ENCODE measurements at regions of chr20 and their contacts with region 1.

Region 1: GRCh38 chr20:2349818-2350508 is 30.7 kb upstream of the TGM6 start:
- DNase-seq: no peak
- H3K4me3 ChIP-seq: no peak overlapping the region
- H3K27ac ChIP-seq: no peak overlapping the region
- H3K4me1 ChIP-seq: peaks cover 4% of the 10 kb centered on the region
- CTCF ChIP-seq: no peak

Region 2: DNA sequence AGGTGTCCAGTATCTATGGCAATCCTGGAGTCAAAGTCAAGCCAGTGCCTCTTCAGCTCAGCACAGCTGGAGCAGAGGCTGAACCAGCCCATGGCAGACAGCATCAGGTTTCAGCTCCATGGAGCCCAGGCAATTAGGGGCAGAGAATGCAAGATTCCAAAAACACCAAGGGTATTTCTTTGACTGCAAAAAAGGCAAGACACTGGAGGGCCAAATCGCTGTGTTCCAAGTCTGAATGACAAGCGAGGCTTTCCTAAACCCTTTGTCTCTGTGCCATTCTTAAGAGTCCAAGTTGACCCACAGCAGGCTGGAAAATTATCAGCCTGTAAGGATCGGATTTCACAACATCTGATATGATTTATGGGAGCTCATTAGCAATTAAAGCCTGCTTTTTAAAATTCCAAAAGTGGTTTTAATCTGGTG is 103.9 kb before region 1 on chr20:
- CTCF ChIA-PET with region 1: no interaction called
- POLR2A ChIA-PET with region 1: no interaction called
- intact Hi-C with region 1: loop called (anchors 10 kb)
- DNase-seq: no peak
- H3K4me3 ChIP-seq: no peak overlapping the region
- H3K27ac ChIP-seq: no peak overlapping the region
- H3K4me1 ChIP-seq: no peaks in the 10 kb centered on the region
- CTCF ChIP-seq: no peak

Region 3: GRCh38 chr20:2752567-2753460 is 402.9 kb after region 1 on chr20:
- CTCF ChIA-PET with region 1: no interaction called
- POLR2A ChIA-PET with region 1: no interaction called
- intact Hi-C with region 1: no loop called
- DNase-seq: no peak
- H3K4me3 ChIP-seq: no peak overlapping the region
- H3K27ac ChIP-seq: no peak overlapping the region
- H3K4me1 ChIP-seq: no peaks in the 10 kb centered on the region
- CTCF ChIP-seq: peak; percentile 68

Region 4: GRCh38 chr20:2919518-2920245 is 569.7 kb after region 1 on chr20:
- CTCF ChIA-PET with region 1: no interaction called
- POLR2A ChIA-PET with region 1: interaction called, 10 read pairs
- intact Hi-C with region 1: no loop called
- DNase-seq: no peak
- H3K4me3 ChIP-seq: no peak overlapping the region
- H3K27ac ChIP-seq: no peak overlapping the region
- H3K4me1 ChIP-seq: peaks cover 8% of the 10 kb centered on the region
- CTCF ChIP-seq: no peak